ENCODE measurements at regions of chr20 and their contacts with region 1.

Region 1: GRCh38 chr20:347640-348484 is 951 bp downstream of the NRSN2 start:
- DNase-seq: peak; percentile 98

Region 2: GRCh38 chr20:278607-279571 is 69.0 kb before region 1 on chr20:
- CTCF ChIA-PET with region 1: no interaction called
- POLR2A ChIA-PET with region 1: no interaction called
- DNase-seq: no peak

Region 3: DNA sequence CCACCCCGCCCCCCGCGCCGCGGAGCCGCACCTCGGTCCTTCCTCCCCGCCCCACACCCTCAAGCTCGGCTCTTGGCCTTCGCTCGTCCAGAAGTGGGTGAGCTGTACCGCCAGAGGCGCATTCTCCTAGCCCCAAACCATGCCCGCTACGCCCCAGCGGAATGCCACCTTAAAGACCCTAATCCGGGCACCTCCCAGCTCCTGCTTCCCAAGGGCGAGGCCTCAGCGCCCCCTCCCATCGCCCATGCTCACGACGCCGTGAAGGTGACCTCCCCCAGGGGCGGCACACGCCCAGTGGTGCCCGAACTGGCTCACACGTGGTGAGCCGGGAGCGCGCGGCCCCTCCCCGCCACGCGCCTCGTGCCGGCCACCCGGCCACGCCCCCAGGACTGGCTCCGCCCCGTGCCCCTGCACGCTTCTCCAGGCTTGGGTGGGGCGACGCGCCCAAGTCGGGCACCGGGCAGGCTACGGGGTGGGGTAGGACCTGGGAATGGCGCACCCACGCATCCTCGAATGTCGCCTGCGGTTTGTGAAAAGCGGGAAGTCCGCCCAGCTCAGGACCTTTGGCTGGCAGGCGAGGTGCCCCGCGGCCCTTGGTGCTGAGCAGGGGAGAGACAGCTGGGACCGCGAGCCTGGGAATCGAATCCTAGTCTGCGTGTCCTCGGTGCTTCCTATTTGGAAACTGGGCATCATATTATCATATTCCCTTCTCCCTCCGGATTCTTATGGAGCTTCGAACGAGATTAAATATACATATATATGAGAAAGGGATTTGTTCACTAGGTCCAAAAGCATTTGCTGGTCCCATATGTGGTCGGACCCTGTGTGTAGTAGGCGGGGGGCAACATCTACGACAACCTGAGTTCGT is 23.5 kb before region 1 on chr20:
- CTCF ChIA-PET with region 1: interaction called, 24 read pairs
- POLR2A ChIA-PET with region 1: interaction called, 29 read pairs
- DNase-seq: peak; percentile 84

Region 4: DNA sequence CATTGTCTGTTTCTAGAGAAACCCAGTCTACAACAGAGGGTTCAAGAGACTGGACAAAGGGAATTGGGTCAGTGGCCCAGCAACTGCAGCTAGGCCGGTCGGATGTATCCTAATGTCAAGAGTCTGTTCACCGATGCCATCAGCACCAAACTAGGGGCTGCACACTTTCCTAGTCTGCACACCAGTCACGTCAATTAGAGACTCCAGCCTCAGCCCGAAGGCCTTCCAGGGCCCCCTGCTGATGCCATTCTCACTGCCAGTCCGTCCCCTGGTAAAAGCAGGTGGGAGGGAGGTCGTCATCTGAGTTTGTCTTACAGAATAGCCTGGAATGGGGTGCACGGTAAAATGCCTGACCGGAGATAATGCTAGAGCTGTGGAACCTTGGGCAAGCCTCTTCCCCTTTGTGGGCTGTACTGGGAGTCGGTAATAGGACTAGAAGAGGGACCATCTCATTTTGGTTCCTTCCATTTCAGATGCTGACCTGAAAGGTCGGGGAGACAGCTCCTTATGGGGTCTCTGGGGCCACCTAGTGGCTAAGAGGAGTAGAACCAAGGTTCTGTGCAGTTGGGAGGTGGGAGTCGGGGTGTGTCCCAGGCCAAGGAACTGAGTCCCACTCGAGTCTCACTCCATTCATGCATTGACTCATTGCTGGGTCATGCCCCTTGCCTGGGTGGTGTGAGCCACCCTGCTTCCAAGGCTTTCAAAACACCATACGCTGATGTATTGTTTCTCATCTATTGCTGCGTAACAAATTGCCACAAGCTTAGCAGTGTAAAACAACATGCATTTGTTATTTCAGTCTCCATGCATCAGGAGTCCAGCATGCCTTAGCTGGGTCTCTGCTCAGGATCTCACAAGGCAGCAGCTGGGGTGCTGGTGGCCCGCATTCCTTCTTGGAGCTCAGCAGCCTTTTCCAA is 17.4 kb before region 1 on chr20:
- CTCF ChIA-PET with region 1: interaction called, 24 read pairs
- POLR2A ChIA-PET with region 1: interaction called, 29 read pairs
- DNase-seq: peak; percentile 68

Region 5: GRCh38 chr20:371755-372542 is 24.1 kb after region 1 on chr20:
- CTCF ChIA-PET with region 1: no interaction called
- POLR2A ChIA-PET with region 1: interaction called, 15 read pairs
- DNase-seq: no peak

Measured in HEK293T (cell line).